CD4-positive, alpha-beta T cell (primary cell): ENCODE measurements at regions of chr19 and their contacts with region 1.

Region 1: DNA sequence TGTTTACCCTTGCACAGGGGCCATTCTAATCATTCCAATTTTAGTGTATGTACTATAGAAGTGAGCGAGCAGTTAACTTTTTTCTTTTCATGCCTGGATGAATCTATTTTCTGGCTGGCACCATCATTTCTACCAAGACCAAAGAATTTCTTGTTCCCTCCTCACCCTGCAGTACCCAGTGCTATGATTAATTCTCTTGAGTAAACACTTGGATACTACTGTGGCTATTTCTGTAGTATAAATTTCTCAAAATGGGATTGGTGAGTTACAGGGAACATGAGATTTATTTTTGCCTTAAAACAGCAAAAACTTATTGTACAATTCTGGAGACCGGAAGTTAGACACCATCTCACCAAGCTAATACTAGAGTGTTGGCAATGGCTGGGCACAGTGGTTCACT is 7.6 kb downstream of the ZNF446 start:
- DNase-seq: no peak
- ATAC-seq: no peak
- H3K4me3 ChIP-seq: no peak overlapping the region
- H3K4me3 Mint-ChIP-seq: no peak overlapping the region
- H3K27ac ChIP-seq: no peak overlapping the region
- H3K27ac Mint-ChIP-seq: no peak overlapping the region
- H3K4me1 ChIP-seq: no peaks in the 10 kb centered on the region
- H3K4me1 Mint-ChIP-seq: no peaks in the 10 kb centered on the region
- H3K27me3 ChIP-seq: no peaks in the 10 kb centered on the region
- H3K27me3 Mint-ChIP-seq: no peaks in the 10 kb centered on the region
- CTCF ChIP-seq: no peak

Region 2: GRCh38 chr19:56862741-56863140 is 1621.0 kb before region 1 on chr19:
- CTCF ChIA-PET with region 1: no interaction called
- POLR2A ChIA-PET with region 1: no interaction called
- intact Hi-C with region 1: no loop called
- DNase-seq: no peak
- ATAC-seq: no peak
- H3K4me3 ChIP-seq: no peak overlapping the region
- H3K4me3 Mint-ChIP-seq: no peak overlapping the region
- H3K27ac ChIP-seq: no peak overlapping the region
- H3K27ac Mint-ChIP-seq: no peak overlapping the region
- H3K4me1 ChIP-seq: no peaks in the 10 kb centered on the region
- H3K4me1 Mint-ChIP-seq: no peaks in the 10 kb centered on the region
- H3K27me3 ChIP-seq: no peaks in the 10 kb centered on the region
- H3K27me3 Mint-ChIP-seq: no peaks in the 10 kb centered on the region
- CTCF ChIP-seq: no peak

Region 3: DNA sequence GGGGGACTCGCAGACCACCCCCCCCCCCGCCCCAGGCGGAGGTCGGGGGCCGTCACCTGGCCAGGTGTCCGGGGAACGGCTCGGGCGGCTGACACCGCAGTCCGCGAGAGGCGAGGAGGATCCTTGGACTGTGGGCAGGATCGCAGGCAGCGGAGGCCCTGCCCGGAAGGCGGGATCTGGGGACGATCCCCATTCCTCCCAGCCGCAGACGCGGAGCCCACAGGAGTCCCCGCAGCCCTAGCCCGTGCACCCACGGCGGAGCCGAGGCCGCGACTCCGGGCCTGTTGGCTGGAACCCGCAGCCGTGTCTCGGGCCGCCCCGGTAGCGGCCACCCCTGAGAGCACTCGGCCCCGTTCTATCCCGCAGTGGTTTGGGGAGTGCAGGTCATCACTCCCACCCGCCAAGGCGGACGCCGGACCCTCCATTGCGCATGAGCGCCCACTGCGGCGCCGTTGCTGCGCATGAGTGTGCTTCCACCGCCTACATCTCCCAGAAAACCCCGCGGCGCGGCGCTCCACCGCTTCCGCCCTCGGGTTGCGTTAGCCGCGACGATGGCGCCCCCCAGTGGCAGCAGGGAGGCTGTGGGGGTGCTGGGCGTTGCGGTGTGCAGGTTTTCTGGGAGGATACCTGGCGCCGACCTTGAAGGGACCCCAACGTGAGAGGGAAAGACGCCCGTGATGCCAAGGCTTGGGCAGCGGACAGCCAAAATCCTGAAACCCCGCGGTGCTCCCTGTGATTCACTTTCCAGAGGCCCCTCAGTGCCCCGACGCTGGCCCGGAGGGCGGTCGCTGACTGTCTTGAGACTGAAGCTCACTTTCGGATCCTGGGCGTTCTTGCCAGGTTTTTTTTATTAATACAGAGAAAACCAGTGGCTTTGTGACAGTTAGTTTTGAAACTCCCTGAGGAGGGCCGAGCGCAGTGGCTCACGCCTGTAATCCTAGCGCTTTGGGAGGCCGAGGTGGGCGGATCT is 328.8 kb before region 1 on chr19:
- CTCF ChIA-PET with region 1: no interaction called
- POLR2A ChIA-PET with region 1: no interaction called
- intact Hi-C with region 1: no loop called
- DNase-seq: peak; percentile 93 to 100 (median 97)
- ATAC-seq: peak; percentile 91
- H3K4me3 ChIP-seq: peak overlapping the region; percentile 76
- H3K4me3 Mint-ChIP-seq: peak overlapping the region; percentile 93
- H3K27ac ChIP-seq: peak overlapping the region; percentile 52 to 62
- H3K27ac Mint-ChIP-seq: peak overlapping the region; percentile 78
- H3K4me1 ChIP-seq: peaks cover 31% of the 10 kb centered on the region
- H3K4me1 Mint-ChIP-seq: peaks cover 23% of the 10 kb centered on the region
- H3K27me3 ChIP-seq: no peaks in the 10 kb centered on the region
- H3K27me3 Mint-ChIP-seq: no peaks in the 10 kb centered on the region
- CTCF ChIP-seq: peak; percentile 97

Region 4: DNA sequence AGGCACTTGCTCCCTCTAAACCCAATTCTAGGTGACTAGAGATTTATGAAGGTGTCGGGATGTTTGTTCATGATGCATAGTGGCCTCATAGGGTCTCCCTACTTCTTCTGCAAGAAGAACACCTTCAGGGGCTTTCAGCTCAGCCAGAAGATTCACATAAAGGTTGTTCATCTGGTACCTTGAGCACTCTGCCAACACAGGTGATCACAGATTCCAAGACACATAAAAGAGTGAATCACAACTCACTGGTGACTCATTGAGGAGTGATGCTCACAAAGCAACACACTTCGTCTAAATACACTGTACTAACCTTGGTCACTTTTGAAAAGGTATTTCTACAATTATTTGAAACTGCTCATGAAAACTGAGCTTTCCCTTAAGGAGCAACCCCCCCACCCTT is 23.7 kb before region 1 on chr19:
- CTCF ChIA-PET with region 1: no interaction called
- POLR2A ChIA-PET with region 1: no interaction called
- intact Hi-C with region 1: loop called in 1 of 2 experiments (anchors 1 kb)
- DNase-seq: no peak
- ATAC-seq: no peak
- H3K4me3 ChIP-seq: no peak overlapping the region
- H3K4me3 Mint-ChIP-seq: no peak overlapping the region
- H3K27ac ChIP-seq: no peak overlapping the region
- H3K27ac Mint-ChIP-seq: no peak overlapping the region
- H3K4me1 ChIP-seq: no peaks in the 10 kb centered on the region
- H3K4me1 Mint-ChIP-seq: no peaks in the 10 kb centered on the region
- H3K27me3 ChIP-seq: no peaks in the 10 kb centered on the region
- H3K27me3 Mint-ChIP-seq: no peaks in the 10 kb centered on the region
- CTCF ChIP-seq: no peak

Region 5: DNA sequence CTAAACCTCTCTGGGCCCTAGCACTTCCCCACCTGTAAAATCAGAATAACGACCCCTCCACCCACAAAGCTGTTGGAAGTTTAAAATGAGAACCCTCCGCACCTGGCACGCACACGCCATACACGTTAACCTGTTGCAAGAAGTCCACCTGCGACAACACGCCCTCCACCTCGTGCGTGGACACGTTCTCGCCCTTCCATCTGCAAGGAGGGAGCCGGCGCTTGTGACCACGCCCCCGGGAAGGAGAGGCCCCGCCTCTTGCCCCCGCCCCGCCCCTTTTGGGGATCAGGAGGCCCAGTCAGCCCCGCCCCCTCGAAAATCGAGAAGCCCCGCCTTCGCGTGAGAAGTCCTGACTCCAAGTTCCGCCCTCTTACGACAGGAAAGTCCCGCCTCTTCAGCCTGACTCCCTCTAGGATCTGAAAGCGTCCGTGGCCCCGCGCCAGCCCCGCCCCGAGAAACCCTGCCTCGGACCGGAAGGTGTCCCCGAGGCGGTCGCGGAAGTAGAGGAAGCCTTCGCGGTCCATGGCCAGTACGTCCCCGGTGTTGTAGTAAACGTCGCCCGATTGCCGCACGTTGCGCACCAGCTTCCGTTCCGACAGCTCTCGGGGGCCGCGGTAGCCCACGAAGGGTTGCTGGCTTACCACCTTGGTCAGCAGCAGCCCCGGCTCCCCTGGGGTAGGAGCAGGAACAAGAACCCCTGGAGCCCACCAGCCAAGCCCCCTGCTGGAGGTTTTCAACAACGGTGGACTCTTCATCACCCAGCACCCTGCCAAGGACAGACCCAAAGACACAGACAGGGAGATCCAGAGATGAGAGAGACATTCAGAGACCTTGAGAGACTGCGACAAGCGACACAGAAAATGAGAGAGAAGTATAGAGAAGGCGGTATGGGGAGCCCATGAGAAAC is 15.5 kb after region 1 on chr19:
- CTCF ChIA-PET with region 1: no interaction called
- POLR2A ChIA-PET with region 1: no interaction called
- intact Hi-C with region 1: no loop called
- DNase-seq: peak; percentile 85 to 98 (median 92)
- ATAC-seq: peak; percentile 83
- H3K4me3 ChIP-seq: peak overlapping the region; percentile 57
- H3K4me3 Mint-ChIP-seq: peak overlapping the region; percentile 94
- H3K27ac ChIP-seq: peak overlapping the region; percentile 57 to 79
- H3K27ac Mint-ChIP-seq: peak overlapping the region; percentile 86
- H3K4me1 ChIP-seq: peaks cover 25% of the 10 kb centered on the region
- H3K4me1 Mint-ChIP-seq: peaks cover 16% of the 10 kb centered on the region
- H3K27me3 ChIP-seq: no peaks in the 10 kb centered on the region
- H3K27me3 Mint-ChIP-seq: no peaks in the 10 kb centered on the region
- CTCF ChIP-seq: no peak